ENCODE measurements at regions of chr3 and their contacts with region 1.

Region 1: GRCh38 chr3:52770496-52771333 is at the start of gene NEK4:
- DNase-seq: peak; percentile 92
- H3K4me3 Mint-ChIP-seq: peak within 1 kb of the TSS; percentile 77
- H3K27ac Mint-ChIP-seq: peak within 1 kb of the TSS; percentile 80
- H3K4me1 Mint-ChIP-seq: peaks cover 20% of the 10 kb centered on the region
- H3K27me3 Mint-ChIP-seq: no peaks in the 10 kb centered on the region
- CTCF ChIP-seq: no peak
- total RNA-seq, gene NEK4: 24.6 and 32.1 TPM in 2 replicates

Region 2: DNA sequence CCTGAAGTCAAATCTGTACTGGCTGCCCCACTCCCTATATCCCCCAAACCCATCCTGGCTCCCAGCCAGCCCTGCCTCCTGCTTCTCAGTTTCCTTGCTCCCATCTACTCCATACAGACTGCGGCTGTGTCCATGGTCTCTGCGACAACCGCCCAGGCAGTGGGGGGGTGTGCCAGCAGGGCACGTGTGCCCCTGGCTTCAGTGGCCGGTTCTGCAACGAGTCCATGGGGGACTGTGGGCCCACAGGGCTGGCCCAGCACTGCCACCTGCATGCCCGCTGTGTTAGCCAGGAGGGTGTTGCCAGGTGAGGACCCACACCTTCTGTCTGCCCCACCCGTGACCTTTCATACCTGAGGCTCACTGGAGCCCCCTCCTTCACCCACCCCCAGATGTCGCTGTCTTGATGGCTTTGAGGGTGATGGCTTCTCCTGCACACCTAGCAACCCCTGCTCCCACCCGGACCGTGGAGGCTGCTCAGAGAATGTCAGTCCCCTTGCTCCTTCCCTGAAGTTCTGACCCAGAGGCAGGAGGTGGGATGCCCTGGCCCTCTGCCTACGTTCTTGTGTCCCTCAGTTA is 260.9 kb before region 1 on chr3:
- CTCF ChIA-PET with region 1: no interaction called
- POLR2A ChIA-PET with region 1: no interaction called
- intact Hi-C with region 1: no loop called
- DNase-seq: no peak
- H3K4me3 Mint-ChIP-seq: no peak overlapping the region
- H3K27ac Mint-ChIP-seq: no peak overlapping the region
- H3K4me1 Mint-ChIP-seq: peaks cover 7% of the 10 kb centered on the region
- H3K27me3 Mint-ChIP-seq: no peaks in the 10 kb centered on the region
- CTCF ChIP-seq: no peak

Region 3: GRCh38 chr3:52705688-52706686 is 64.7 kb before region 1 on chr3 and contains the starts of genes GLT8D1 and SPCS1:
- CTCF ChIA-PET with region 1: no interaction called
- POLR2A ChIA-PET with region 1: interaction called, 10 read pairs
- intact Hi-C with region 1: no loop called
- DNase-seq: peak; percentile 84
- H3K4me3 Mint-ChIP-seq: peak within 1 kb of the TSS; percentile 95
- H3K27ac Mint-ChIP-seq: peak within 1 kb of the TSS; percentile 93
- H3K4me1 Mint-ChIP-seq: peaks cover 7% of the 10 kb centered on the region
- H3K27me3 Mint-ChIP-seq: no peaks in the 10 kb centered on the region
- CTCF ChIP-seq: no peak
- total RNA-seq, gene GLT8D1: 42.2 and 48.1 TPM in 2 replicates
- total RNA-seq, gene SPCS1: 135 and 172 TPM in 2 replicates

Region 4: GRCh38 chr3:52831500-52832301 is 61.0 kb after region 1 on chr3:
- CTCF ChIA-PET with region 1: interaction called, 4 read pairs
- POLR2A ChIA-PET with region 1: no interaction called
- intact Hi-C with region 1: loop called (anchors 1 kb)
- DNase-seq: peak; percentile 93
- H3K4me3 Mint-ChIP-seq: no peak overlapping the region
- H3K27ac Mint-ChIP-seq: no peak overlapping the region
- H3K4me1 Mint-ChIP-seq: peaks cover 6% of the 10 kb centered on the region
- H3K27me3 Mint-ChIP-seq: no peaks in the 10 kb centered on the region
- CTCF ChIP-seq: no peak